ENCODE measurements at regions of chr6 and their contacts with region 1.

Region 1: GRCh38 chr6:130776287-130776925 is 50.8 kb upstream of the SMLR1 start:
- DNase-seq: no peak
- H3K4me3 ChIP-seq: no peak overlapping the region
- H3K4me3 Mint-ChIP-seq: peak overlapping the region in 2 of 7 donors; percentile 5 to 43
- H3K27ac ChIP-seq: no peak overlapping the region
- H3K27ac Mint-ChIP-seq: peak overlapping the region in 2 of 8 donors; percentile 9 to 83
- H3K4me1 ChIP-seq: peaks cover 12% of the 10 kb centered on the region
- H3K4me1 Mint-ChIP-seq: peaks cover 25 to 45% (median 35%) of the 10 kb centered on the region in 3 donors
- H3K27me3 ChIP-seq: no peaks in the 10 kb centered on the region
- H3K27me3 Mint-ChIP-seq: no peaks in the 10 kb centered on the region

Region 2: DNA sequence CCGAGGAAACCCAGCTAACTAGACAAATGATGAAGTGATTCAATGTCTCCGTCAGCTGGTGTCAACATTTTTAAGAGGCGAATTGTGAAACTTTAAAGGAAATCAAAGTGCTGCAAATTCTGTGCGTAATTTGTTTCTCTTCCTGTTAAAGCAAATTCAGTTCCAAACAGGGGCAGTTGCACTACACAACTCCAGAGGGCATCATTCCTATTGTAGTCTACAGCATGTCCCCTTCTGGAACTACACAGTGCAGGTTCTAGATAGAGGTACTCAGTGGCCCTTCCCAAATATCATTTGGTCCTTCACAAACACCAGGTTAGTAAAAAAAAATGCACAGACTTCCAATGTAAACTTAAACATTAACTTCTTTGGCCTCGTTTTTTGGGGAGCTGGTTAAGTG is 12.5 kb after region 1 on chr6:
- CTCF ChIA-PET with region 1: no interaction called
- POLR2A ChIA-PET with region 1: no interaction called
- DNase-seq: no peak
- H3K4me3 ChIP-seq: no peak overlapping the region
- H3K4me3 Mint-ChIP-seq: no peak overlapping the region
- H3K27ac ChIP-seq: no peak overlapping the region
- H3K27ac Mint-ChIP-seq: no peak overlapping the region
- H3K4me1 ChIP-seq: no peaks in the 10 kb centered on the region
- H3K4me1 Mint-ChIP-seq: no peaks in the 10 kb centered on the region
- H3K27me3 ChIP-seq: no peaks in the 10 kb centered on the region
- H3K27me3 Mint-ChIP-seq: peaks cover 2 to 4% of the 10 kb centered on the region in 2 donors

Region 3: DNA sequence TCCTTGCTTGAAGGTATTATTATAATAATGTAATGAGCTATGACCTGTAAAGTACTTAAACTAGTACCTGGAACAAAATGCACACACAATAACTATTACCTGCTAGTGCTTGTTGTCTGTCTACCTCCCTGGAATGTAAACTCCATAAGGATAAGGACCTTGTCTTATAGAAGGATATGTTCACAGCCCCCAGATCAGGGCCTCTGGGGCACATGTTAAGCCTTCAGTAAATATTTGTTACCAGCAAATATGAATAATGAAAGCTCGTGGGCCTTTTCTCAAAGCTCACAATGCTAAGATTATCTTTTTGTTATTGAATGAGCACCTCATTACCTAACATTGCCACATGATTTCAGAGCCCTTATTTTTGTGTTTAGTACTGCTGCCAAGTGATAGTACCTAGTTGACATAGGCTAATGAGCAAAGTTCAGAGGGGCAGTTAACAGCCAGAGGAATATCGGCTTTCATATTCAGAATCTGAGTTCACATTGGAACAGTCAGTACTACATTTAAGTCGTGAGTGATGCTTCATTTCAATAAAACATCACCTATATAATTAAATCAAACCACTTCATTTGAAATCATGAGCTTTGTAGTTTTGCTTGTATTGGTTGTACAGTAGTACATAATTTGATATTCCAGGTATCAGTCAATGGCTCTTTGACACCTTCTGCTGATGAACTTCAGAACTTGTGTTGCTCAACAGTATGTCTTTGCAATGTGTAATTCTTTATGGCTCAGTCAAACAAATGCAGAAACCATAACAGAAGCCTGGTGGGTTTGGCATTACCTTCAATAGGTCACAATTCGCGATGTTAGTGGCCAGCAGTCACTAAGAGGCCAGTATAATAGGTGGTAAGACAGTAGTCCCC is 39.0 kb after region 1 on chr6:
- CTCF ChIA-PET with region 1: no interaction called
- POLR2A ChIA-PET with region 1: no interaction called
- DNase-seq: no peak
- H3K4me3 ChIP-seq: no peak overlapping the region
- H3K4me3 Mint-ChIP-seq: no peak overlapping the region
- H3K27ac ChIP-seq: no peak overlapping the region
- H3K27ac Mint-ChIP-seq: no peak overlapping the region
- H3K4me1 ChIP-seq: no peaks in the 10 kb centered on the region
- H3K4me1 Mint-ChIP-seq: no peaks in the 10 kb centered on the region
- H3K27me3 ChIP-seq: no peaks in the 10 kb centered on the region
- H3K27me3 Mint-ChIP-seq: peaks cover 0 to 6% of the 10 kb centered on the region in 2 donors

Region 4: GRCh38 chr6:131303338-131303954 is 527.0 kb after region 1 on chr6:
- CTCF ChIA-PET with region 1: no interaction called
- POLR2A ChIA-PET with region 1: interaction called, 11 read pairs
- DNase-seq: no peak
- H3K4me3 ChIP-seq: no peak overlapping the region
- H3K4me3 Mint-ChIP-seq: no peak overlapping the region
- H3K27ac ChIP-seq: no peak overlapping the region
- H3K27ac Mint-ChIP-seq: peak overlapping the region in 2 of 8 donors; percentile 12 to 38
- H3K4me1 ChIP-seq: no peaks in the 10 kb centered on the region
- H3K4me1 Mint-ChIP-seq: peaks cover 9 to 16% (median 12%) of the 10 kb centered on the region in 3 donors
- H3K27me3 ChIP-seq: no peaks in the 10 kb centered on the region
- H3K27me3 Mint-ChIP-seq: peaks cover 0 to 3% of the 10 kb centered on the region in 2 donors

Measured in CD8-positive, alpha-beta memory T cell (primary cell).